Left ventricle myocardium inferior (tissue), 1 donor: ENCODE measurements at regions of chr1 and their contacts with region 1.

Region 1: DNA sequence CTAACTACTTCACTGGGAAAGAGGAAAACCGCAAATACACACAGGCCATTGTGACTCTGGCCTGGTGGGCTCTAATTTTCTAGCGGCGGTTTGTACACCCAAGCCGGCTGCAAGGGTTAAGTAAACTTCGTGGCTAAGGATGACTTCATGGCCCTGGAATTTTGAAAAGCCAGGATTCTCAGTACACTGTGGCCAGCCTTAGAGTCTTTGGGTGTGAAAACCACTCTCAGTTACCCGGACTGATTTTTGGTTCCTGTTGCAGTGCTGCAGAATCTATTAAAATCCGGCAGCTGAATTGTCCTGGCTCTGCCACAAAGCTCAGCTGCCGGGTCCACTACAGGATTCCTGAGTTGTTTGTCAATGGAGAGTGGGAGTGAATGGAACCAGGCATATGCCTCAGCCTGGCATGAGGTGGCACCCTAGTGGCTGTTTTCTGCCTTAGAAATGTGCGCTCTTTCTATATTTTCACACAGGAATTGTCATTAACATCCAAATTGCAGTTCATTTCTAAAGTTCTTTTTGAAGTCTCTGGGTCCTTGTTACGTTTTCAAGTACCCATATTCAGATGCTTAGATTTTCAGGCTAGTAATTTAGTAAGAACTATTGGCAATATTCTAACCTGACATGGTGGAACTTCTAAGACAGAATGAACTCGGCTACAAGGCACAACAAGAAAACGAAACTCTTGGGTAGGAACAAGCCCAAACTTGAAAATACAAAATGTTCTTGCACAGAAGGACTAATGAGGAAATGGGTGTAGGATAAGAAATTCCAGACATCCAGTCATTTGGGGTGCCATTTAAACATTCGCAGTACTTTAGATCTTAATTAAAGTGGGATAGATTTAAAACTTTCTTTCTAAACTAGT is 255.9 kb downstream of the NFIA start:
- DNase-seq: peak; percentile 65
- H3K4me3 ChIP-seq: peak overlapping the region; percentile 42
- H3K27ac ChIP-seq: peak overlapping the region; percentile 87
- H3K4me1 ChIP-seq: peaks cover 64% of the 10 kb centered on the region
- H3K27me3 ChIP-seq: no peaks in the 10 kb centered on the region
- CTCF ChIP-seq: peak; percentile 80

Region 2: GRCh38 chr1:61056573-61057439 is 281.4 kb before region 1 on chr1:
- intact Hi-C with region 1: loop called (anchors 5 kb)
- DNase-seq: peak; percentile 65
- H3K4me3 ChIP-seq: peak overlapping the region; percentile 77
- H3K27ac ChIP-seq: peak overlapping the region; percentile 100
- H3K4me1 ChIP-seq: peaks cover 59% of the 10 kb centered on the region
- H3K27me3 ChIP-seq: no peaks in the 10 kb centered on the region
- CTCF ChIP-seq: peak; percentile 9

Region 3: GRCh38 chr1:61079898-61080336 is 258.3 kb before region 1 on chr1:
- intact Hi-C with region 1: loop called (anchors 10 kb)
- DNase-seq: peak; percentile 85
- H3K4me3 ChIP-seq: peak overlapping the region; percentile 88
- H3K27ac ChIP-seq: peak overlapping the region; percentile 98
- H3K4me1 ChIP-seq: peaks cover 71% of the 10 kb centered on the region
- H3K27me3 ChIP-seq: no peaks in the 10 kb centered on the region
- CTCF ChIP-seq: peak; percentile 46

Region 4: GRCh38 chr1:61472876-61473275 is 134.7 kb after region 1 on chr1:
- intact Hi-C with region 1: no loop called
- DNase-seq: no peak
- H3K4me3 ChIP-seq: no peak overlapping the region
- H3K27ac ChIP-seq: no peak overlapping the region
- H3K4me1 ChIP-seq: no peaks in the 10 kb centered on the region
- H3K27me3 ChIP-seq: peaks cover 4% of the 10 kb centered on the region
- CTCF ChIP-seq: no peak